Right lobe of liver (tissue), 6 donors: ENCODE measurements at regions of chr1 and their contacts with region 1.

Region 1: DNA sequence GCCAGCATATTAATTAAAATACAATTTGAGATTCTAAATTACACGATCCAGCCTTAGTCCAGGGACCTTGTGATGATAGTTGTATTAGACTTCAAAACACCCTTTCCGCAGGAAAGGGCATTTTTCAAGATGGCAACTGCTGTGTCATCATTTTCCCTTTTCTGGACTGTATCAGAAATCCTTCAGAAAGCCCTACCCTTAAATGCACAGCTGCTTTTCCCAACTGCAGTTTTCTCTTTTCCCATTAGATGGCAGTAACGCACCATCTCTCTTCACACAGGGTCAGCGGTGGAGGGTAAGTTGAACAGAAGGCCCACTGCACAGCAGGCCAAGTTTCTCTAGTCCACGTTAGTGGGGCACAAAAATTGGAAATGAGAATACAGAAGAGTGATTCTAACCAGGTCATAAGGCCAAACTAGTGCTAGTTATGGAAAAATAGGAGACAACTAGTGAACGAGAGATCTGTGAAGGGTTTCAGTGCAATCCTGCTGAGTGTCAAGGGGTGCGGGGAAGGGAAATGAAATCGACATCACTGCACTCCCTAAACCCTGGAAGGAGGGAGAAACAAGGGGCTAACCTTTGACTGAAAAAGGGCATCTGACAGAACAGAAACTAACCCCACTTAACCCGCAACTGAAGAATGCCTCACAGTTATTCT is 22.1 kb upstream of the TDRD10 start:
- DNase-seq: peak in 1 of 3 donors; percentile 56
- ATAC-seq: peak; percentile 94 to 97 (median 96)
- H3K4me3 ChIP-seq: no peak overlapping the region
- H3K27ac ChIP-seq: no peak overlapping the region
- H3K4me1 ChIP-seq: peaks cover 0 to 7% (median 0%) of the 10 kb centered on the region in 4 donors
- H3K27me3 ChIP-seq: no peaks in the 10 kb centered on the region
- CTCF ChIP-seq: peak; percentile 93 to 99 (median 94)
- POLR2A ChIP-seq: no peak

Region 2: DNA sequence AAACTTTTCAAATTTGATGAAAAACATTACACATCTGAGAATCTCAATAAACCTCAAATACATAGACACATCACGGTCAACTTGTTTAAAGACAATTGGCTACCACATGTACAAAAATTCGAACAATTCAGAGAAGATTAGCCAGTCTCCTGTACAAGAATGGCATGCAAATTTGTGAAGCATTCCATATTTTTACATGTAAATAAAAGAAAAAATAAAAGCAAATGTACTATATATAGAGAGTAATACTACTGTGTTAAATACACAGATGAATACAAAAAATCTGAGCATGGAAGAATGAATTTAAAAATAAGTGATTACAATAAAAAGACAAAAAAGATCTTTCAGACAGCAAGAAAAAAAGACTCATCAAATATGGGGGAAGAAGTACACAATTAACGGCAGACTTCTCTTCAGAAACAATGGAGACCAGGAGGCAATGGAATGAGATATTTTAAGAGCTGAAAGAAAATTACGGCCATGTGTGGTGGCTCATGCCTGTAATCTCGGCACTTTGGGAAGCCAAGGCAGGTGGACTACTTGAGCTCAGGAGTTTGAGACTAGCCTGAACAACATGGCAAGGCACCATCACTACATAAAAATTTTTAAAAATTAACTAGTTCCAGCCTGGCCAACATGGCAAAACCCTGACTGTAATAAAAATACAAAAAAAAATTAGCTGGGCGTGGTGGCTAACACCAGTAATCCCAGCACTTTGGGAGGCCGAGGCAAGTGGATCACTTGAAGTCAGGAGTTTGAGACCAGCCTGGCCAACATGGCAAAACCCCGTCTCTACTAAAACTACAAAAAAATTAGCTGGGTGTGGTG is 184.3 kb before region 1 on chr1:
- intact Hi-C with region 1: no loop called
- DNase-seq: no peak
- ATAC-seq: no peak
- H3K4me3 ChIP-seq: no peak overlapping the region
- H3K27ac ChIP-seq: no peak overlapping the region
- H3K4me1 ChIP-seq: no peaks in the 10 kb centered on the region
- H3K27me3 ChIP-seq: no peaks in the 10 kb centered on the region
- CTCF ChIP-seq: no peak
- POLR2A ChIP-seq: no peak

Region 3: DNA sequence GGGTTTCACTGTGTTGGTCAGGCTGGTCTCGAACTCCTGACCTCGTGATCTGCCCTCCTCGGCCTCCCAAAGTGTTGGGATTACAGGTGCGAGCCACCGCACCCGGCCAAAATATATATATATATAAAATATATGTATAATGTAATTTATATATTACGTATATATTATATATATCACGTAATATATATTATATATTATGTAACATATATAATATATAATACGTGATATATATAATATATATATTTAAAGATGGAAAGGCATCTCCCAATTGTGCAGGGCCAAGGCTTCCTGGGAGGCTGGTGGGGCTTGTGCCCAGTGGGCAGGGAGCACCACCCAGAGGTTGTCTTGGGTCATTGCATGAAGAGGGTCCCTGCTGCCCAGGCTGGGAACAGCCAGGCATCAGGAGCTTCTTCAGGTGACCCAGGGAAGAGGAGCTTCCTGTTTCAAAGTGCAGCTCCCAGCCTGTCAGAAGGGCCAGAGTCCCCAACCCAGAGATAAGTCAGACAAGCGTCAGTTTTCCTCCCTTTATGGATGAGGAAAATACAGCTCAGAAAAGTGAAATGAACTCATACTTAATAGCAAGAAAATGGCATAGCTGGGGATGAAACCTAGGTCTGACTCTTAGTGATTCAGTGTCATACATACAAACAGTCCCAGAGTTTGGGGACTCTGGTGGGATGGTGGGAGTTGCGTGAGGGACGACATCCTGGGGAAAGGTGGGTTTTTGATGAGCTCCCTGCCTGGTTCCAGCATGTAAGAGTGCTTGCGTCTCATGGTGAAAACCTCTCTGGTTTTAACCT is 66.6 kb after region 1 on chr1:
- intact Hi-C with region 1: loop called (anchors 10 kb)
- DNase-seq: peak; percentile 58 to 66 (median 61)
- ATAC-seq: peak; percentile 70 to 77 (median 74)
- H3K4me3 ChIP-seq: no peak overlapping the region
- H3K27ac ChIP-seq: peak overlapping the region in 2 of 3 donors; percentile 39 to 85
- H3K4me1 ChIP-seq: peaks cover 0 to 38% (median 14%) of the 10 kb centered on the region in 4 donors
- H3K27me3 ChIP-seq: no peaks in the 10 kb centered on the region
- CTCF ChIP-seq: peak; percentile 59 to 83 (median 76)
- POLR2A ChIP-seq: no peak